ENCODE measurements at regions of chr5 and their contacts with region 1.

Region 1: DNA sequence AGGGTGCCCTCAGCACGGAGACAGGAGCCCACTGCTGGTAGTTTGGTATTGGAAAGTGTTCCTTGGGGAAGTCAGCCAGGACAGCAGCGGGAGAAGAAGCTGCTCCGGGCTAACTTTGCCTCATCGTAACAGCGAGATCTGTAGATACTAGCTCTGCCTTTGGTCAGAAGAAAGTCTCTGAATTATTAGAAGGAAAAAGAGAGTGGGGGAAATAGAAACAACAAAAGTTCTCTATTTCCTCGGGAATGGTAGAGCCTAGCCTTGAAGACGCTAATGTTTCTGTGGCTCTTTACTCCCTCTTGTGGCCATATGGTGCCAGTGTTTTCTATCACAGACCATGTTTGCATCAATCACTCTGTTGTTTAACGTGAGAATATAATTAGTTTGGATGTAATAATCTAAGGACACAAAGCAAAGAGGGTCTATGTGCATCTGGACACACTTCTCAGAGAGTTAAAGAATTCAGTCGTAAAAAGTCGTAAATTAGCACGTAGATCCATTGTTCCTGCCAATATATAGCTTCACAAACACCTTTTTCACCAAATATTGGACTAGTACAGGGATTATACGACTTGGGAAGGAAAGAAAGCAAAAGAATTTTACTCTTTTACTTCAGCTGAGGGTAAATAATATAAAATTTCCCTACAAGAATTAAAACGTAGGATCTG is 40.2 kb upstream of the HSD17B4 start:
- DNase-seq: peak; percentile 51 to 82 (median 64)
- H3K4me3 ChIP-seq: peak overlapping the region in 2 of 4 donors; percentile 36 to 64
- H3K27ac ChIP-seq: peak overlapping the region in 4 of 5 donors; percentile 42 to 75 (median 66)
- H3K4me1 ChIP-seq: peaks cover 8 to 9% of the 10 kb centered on the region in 2 donors
- H3K27me3 ChIP-seq: no peaks in the 10 kb centered on the region
- CTCF ChIP-seq: peak; percentile 86 to 96 (median 93)
- POLR2A ChIP-seq: no peak

Region 2: GRCh38 chr5:118987988-118988865 is 423.8 kb before region 1 on chr5 and contains the start of gene DTWD2:
- intact Hi-C with region 1: loop called in 1 of 2 experiments (anchors 5 kb)
- DNase-seq: peak; percentile 91 to 96 (median 93)
- H3K4me3 ChIP-seq: peak within 1 kb of the TSS; percentile 46 to 83 (median 66)
- H3K27ac ChIP-seq: peak within 1 kb of the TSS; percentile 89 to 99 (median 96)
- H3K4me1 ChIP-seq: peaks cover 5 to 20% of the 10 kb centered on the region in 2 donors
- H3K27me3 ChIP-seq: no peaks in the 10 kb centered on the region
- CTCF ChIP-seq: peak; percentile 72 to 91 (median 84)
- POLR2A ChIP-seq: peak; percentile 67 to 74
- total RNA-seq, gene DTWD2: 6.6 to 23.6 (median 8.9) TPM

Region 3: GRCh38 chr5:119267958-119268386 is 144.1 kb before region 1 on chr5:
- intact Hi-C with region 1: loop called in 1 of 2 experiments (anchors 10 kb)
- DNase-seq: peak; percentile 88 to 98 (median 95)
- H3K4me3 ChIP-seq: peak overlapping the region; percentile 13 to 77 (median 68)
- H3K27ac ChIP-seq: peak overlapping the region; percentile 76 to 89 (median 85)
- H3K4me1 ChIP-seq: peaks cover 0 to 11% of the 10 kb centered on the region in 2 donors
- H3K27me3 ChIP-seq: no peaks in the 10 kb centered on the region
- CTCF ChIP-seq: peak in 4 of 6 experiments; percentile 25 to 61 (median 32)
- POLR2A ChIP-seq: no peak

Region 4: GRCh38 chr5:119340597-119341218 is 71.4 kb before region 1 on chr5:
- intact Hi-C with region 1: no loop called
- DNase-seq: no peak
- H3K4me3 ChIP-seq: no peak overlapping the region
- H3K27ac ChIP-seq: no peak overlapping the region
- H3K4me1 ChIP-seq: peaks cover 0 to 12% of the 10 kb centered on the region in 2 donors
- H3K27me3 ChIP-seq: no peaks in the 10 kb centered on the region
- CTCF ChIP-seq: no peak
- POLR2A ChIP-seq: no peak

Measured in adrenal gland (tissue), 19 donors.